ENCODE measurements at regions of chr1 and their contacts with region 1.

Region 1: GRCh38 chr1:85307987-85308832 is 31.8 kb upstream of the BCL10 start:
- DNase-seq: peak; percentile 88 to 89
- H3K4me3 ChIP-seq: no peak overlapping the region
- H3K27ac ChIP-seq: peak overlapping the region in 1 of 2 donors; percentile 33
- H3K4me1 ChIP-seq: no peaks in the 10 kb centered on the region
- H3K27me3 ChIP-seq: no peaks in the 10 kb centered on the region
- CTCF ChIP-seq: peak; percentile 98 to 100 (median 98)
- POLR2A ChIP-seq: no peak

Region 2: DNA sequence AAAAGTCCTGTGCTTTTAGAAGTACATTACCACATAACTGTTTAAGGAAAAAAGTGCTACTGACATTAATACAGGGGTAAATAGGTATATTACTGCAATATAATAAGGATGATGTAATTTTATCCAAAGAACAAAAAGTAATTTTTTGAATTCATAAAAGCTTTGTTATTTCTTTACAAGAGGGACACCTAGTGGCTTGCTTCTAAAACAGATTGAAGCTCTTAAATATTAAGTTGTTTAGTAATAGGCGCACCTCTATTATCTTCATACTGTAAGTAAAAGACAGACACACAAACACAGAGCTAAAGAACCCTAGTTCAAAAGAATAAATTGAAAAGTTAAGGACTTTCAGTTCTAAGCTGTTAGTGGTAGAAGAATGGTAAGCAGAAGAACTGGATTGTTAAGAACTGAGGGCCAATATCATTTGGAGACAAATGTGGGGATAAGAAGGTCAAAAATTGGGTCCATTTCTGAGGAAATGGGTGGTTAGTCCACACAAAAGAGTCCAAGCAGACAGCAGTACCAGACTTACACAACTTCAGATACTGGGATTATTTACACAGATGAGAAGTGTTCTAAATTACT is 384.6 kb after region 1 on chr1:
- intact Hi-C with region 1: loop called (anchors 10 kb)
- DNase-seq: no peak
- H3K4me3 ChIP-seq: no peak overlapping the region
- H3K27ac ChIP-seq: no peak overlapping the region
- H3K4me1 ChIP-seq: no peaks in the 10 kb centered on the region
- H3K27me3 ChIP-seq: no peaks in the 10 kb centered on the region
- CTCF ChIP-seq: peak; percentile 38 to 46 (median 40)
- POLR2A ChIP-seq: no peak